ENCODE measurements at regions of chr14 and their contacts with region 1.

Region 1: DNA sequence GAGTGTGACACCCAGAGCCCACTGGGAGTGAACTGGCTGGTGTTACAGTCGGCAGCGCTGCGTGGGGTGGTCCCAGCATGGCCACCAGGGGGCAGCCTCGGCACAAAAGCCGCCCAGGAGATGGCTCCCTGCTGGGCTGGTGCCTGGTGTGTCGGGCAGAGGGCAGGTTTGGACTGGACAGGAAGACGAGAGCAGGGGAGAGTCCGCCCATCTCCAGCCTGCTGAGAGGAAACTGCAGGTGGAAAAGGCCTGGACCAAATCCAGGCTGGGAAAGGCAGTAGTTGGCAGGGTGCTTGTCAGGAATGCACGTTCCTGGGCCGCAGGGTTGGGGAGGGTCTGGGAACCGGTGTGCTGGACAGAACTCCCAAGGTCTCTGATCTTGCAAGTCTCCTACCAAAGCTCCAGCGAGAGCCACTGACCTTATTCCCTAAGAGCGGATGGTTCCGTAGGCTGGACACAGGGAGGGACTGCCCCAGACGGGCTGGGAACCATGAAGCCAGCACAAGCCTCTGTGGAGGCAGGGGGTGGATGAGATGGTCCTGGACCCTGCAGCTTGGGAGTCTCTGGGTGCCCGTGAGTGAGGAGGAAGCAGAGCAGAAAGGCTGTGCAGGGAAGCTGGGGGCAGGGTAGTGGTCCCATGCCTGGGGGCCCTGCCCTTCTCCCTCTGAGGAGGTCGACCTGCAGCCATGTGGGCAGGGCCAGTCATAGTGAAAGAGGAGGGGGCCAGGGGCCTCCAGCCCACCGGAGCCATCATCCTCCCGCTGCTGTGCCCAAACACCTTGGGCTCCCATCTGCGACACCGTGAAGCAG is 1.8 kb downstream of the AHNAK2 start:
- DNase-seq: peak; percentile 86
- H3K4me3 ChIP-seq: peak overlapping the region; percentile 75 to 82 (median 79)
- H3K27ac ChIP-seq: no peak overlapping the region
- H3K4me1 ChIP-seq: peaks cover 78% of the 10 kb centered on the region
- H3K27me3 ChIP-seq: no peaks in the 10 kb centered on the region
- CTCF ChIP-seq: peak; percentile 81 to 97

Region 2: GRCh38 chr14:104865644-104866441 is 110.6 kb before region 1 on chr14:
- CTCF ChIA-PET with region 1: no interaction called
- dilution Hi-C with region 1: no loop called
- in situ Hi-C with region 1: no loop called
- intact Hi-C with region 1: loop called (anchors 1 kb)
- DNase-seq: peak; percentile 81
- H3K4me3 ChIP-seq: peak overlapping the region; percentile 85 to 86 (median 85)
- H3K27ac ChIP-seq: peak overlapping the region; percentile 69
- H3K4me1 ChIP-seq: peaks cover 29% of the 10 kb centered on the region
- H3K27me3 ChIP-seq: no peaks in the 10 kb centered on the region
- CTCF ChIP-seq: no peak

Region 3: DNA sequence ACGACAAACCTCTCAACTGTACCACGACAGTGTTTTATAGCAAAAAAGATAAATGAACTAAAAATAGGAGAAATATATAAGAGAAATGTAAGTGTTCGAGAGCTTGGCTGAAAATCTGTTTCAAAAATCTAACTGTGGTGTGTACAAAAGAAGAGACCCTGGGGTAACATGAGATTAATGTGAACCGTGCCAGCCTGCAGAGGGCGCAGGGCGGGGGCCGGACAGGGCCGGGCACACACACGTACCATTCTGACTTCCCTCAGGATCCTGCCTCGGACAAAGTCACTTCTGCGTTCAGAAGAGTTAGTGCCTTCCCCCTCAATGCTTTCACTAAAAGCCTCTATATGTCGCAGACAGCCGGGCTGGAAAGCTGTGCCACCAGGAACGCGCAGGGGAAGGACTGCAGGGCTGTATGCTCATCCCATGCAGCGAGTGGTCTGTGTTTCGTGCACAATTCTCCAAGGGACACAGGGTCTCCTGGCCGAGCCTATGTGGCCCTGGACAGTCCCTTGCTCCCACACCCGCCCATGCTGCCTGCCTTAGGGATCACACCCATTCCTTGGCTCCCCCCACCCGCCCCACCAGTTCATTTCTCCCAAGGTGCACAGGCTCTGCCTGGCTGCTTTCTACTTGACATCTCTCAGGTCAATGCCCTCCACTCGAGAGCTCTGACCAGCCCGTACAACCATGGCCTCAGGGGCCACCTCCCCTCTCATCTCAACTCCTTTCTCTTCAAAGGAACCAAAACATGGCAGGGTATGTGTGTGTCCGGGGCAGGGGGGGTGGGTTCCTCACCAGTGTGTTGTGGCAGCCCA is 36.0 kb after region 1 on chr14:
- CTCF ChIA-PET with region 1: no interaction called
- dilution Hi-C with region 1: loop called (anchors 5 kb)
- in situ Hi-C with region 1: no loop called
- intact Hi-C with region 1: loop called (anchors 2 kb)
- DNase-seq: no peak
- H3K4me3 ChIP-seq: no peak overlapping the region
- H3K27ac ChIP-seq: no peak overlapping the region
- H3K4me1 ChIP-seq: peaks cover 36% of the 10 kb centered on the region
- H3K27me3 ChIP-seq: no peaks in the 10 kb centered on the region
- CTCF ChIP-seq: peak; percentile 41 to 70

Region 4: GRCh38 chr14:105020815-105021655 is 44.6 kb after region 1 on chr14 and contains the start of gene CDCA4:
- CTCF ChIA-PET with region 1: no interaction called
- dilution Hi-C with region 1: loop called (anchors 5 kb)
- in situ Hi-C with region 1: loop called in 1 of 2 experiments (anchors 5 kb)
- intact Hi-C with region 1: loop called (anchors 2 kb)
- DNase-seq: peak; percentile 96
- H3K4me3 ChIP-seq: peak within 1 kb of the TSS; percentile 82 to 97 (median 95)
- H3K27ac ChIP-seq: peak within 1 kb of the TSS; percentile 94
- H3K4me1 ChIP-seq: peaks cover 68% of the 10 kb centered on the region
- H3K27me3 ChIP-seq: no peaks in the 10 kb centered on the region
- CTCF ChIP-seq: no peak
- total RNA-seq, gene CDCA4: 38.2 to 61.7 TPM

Region 5: DNA sequence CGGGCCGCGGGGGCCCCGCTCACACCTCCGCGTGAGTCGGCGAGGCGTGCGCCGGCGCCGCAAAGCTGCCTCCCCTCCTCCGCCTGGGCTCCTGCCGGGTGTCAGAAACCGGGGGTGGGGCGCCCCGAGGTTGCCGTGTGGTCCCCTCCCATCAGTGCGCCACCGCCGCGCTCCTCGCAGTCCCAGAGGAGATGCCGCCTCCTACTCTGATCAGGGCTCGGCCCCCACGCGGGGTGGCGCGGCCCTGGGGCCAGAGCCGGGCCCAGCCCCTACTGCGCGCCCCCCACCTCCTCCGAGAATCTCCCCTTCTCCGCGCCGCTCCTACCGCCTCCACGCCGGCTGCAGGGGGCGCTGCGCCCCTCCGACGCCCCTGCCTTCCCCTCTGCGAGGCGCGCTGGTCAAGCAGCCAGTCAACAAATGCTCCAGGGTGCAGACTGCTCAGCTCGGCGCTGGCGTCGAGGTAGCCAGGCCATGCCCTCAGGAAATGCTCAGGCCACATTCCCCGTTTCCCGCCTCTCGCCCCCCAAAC is 192.6 kb after region 1 on chr14:
- CTCF ChIA-PET with region 1: no interaction called
- dilution Hi-C with region 1: no loop called
- in situ Hi-C with region 1: no loop called
- intact Hi-C with region 1: loop called (anchors 1 kb)
- DNase-seq: peak; percentile 29
- H3K4me3 ChIP-seq: peak overlapping the region in 2 of 3 experiments; percentile 34 to 36
- H3K27ac ChIP-seq: no peak overlapping the region
- H3K4me1 ChIP-seq: peaks cover 31% of the 10 kb centered on the region
- H3K27me3 ChIP-seq: no peaks in the 10 kb centered on the region
- CTCF ChIP-seq: peak; percentile 18 to 56

Region 6: DNA sequence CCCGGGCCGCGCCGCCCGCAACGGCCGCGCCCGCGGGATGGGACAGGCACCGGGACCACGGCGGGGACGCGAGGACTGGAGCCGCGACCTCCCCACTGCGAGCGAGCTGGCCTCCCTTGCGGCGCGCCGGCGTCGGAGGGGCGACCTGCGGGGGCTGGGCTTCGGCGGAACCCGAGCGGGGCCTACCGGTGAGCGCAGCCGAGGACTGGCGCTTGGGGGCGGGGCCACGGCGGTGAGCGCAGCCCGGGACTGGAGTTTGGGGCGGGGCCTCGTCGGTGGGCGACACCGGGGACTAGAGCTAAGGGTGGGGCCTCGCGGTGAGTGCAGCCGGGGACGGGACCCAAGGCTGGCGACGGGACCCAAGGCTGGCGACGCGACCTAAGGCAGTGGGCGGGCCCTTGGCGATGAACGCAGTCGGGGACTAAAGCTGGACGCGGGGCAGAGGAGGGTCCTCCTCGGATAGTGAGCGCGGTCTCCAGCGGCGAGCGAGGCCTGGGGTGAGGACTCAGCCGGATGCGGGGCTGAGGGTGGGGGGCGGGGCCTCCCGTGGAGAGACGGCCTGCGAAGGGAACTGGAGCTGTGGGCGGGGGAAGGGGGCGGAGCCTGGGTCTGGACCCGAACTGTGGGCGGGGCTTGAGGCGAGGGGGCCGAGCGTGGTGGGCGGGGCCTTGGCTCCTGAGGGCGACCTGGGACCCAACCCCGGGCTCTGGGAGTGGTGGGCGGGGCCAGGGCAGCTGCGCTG is 324.6 kb after region 1 on chr14 and contains the start of gene BRF1:
- CTCF ChIA-PET with region 1: no interaction called
- dilution Hi-C with region 1: no loop called
- in situ Hi-C with region 1: no loop called
- intact Hi-C with region 1: loop called (anchors 10 kb)
- DNase-seq: peak; percentile 93
- H3K4me3 ChIP-seq: peak within 1 kb of the TSS; percentile 65 to 88 (median 71)
- H3K27ac ChIP-seq: peak within 1 kb of the TSS; percentile 61
- H3K4me1 ChIP-seq: peaks cover 6% of the 10 kb centered on the region
- H3K27me3 ChIP-seq: no peaks in the 10 kb centered on the region
- CTCF ChIP-seq: no peak
- total RNA-seq, gene BRF1: 31.4 to 37.0 TPM

Region 7: DNA sequence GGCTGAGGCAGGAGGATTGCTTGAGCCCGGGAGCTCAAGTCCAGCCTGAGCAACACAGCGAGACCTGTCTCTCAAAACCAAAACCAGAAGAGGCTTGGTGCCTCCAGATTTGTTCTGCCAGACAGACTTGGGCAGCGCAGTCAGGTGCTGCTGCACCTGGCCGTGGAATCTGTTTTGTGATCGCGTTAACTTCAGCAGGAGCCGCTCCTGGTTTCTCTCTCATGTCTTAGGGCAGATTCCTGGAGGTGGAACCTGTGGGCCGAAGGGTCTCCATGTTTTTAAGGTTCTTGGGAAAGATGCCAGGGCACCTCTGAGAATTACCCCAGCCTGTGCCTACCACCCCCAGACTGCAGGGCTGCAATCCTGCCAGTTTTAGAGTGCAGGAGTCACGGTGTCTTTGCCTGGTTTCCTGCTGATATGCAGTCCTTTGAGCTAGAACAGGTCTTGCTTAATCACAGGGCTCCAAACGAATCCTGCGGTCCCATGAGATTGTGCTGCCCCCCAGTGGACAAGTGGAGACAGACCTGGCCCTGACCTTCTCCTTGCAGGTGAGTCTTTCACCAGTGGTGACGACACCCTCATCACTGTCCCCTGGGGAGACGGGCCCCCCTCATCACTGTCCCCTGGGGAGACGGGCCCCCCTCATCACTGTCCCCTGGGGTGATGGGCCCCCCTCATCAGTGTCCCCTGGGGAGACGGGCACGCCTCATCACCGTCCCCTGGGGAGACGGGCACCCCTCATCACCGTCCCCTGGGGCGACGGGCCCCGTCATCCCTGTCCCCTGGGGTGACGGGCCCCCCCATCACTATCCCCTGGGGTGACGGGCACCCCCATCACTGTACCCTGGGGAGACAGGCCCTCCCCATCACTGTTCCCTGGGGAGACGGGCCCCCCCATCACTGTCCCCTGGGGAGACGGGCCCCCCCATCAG is 375.8 kb after region 1 on chr14:
- CTCF ChIA-PET with region 1: no interaction called
- dilution Hi-C with region 1: no loop called
- in situ Hi-C with region 1: no loop called
- intact Hi-C with region 1: loop called (anchors 1 kb)
- DNase-seq: peak; percentile 82
- H3K4me3 ChIP-seq: no peak overlapping the region
- H3K27ac ChIP-seq: no peak overlapping the region
- H3K4me1 ChIP-seq: no peaks in the 10 kb centered on the region
- H3K27me3 ChIP-seq: no peaks in the 10 kb centered on the region
- CTCF ChIP-seq: peak; percentile 85 to 90